ENCODE measurements at regions of chrX and their contacts with region 1.

Region 1: DNA sequence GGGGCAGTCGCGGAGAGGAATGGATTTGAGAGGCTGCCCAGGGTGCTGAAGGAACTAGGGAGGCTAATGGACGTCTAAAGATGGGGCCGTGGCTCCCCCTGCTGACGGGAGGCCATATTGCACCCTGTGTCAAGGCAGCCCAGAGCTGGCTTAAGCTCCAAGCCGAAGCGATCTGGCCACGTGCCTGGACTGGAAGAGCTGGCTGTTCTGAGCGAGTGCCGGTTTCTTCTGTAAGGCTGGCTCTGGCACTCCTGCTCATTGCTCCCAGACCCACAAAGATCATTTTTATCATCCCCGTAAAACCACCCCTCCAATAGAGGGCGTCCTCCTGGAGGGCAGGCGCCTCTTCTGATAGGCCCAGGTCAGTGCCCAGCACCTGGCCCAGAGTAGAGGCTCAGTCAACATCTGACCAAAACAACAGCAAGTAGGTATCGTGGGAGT is 5.6 kb downstream of the PNCK start:
- DNase-seq: peak; percentile 79
- H3K4me3 ChIP-seq: no peak overlapping the region
- H3K27ac ChIP-seq: no peak overlapping the region
- H3K4me1 ChIP-seq: no peaks in the 10 kb centered on the region
- H3K27me3 ChIP-seq: no peaks in the 10 kb centered on the region
- CTCF ChIP-seq: peak; percentile 40 to 84 (median 74)
- POLR2A ChIP-seq: no peak

Region 2: GRCh38 chrX:153539171-153539978 is 128.6 kb before region 1 on chrX:
- intact Hi-C with region 1: loop called (anchors 5 kb)
- DNase-seq: peak; percentile 32
- H3K4me3 ChIP-seq: no peak overlapping the region
- H3K27ac ChIP-seq: no peak overlapping the region
- H3K4me1 ChIP-seq: no peaks in the 10 kb centered on the region
- H3K27me3 ChIP-seq: no peaks in the 10 kb centered on the region
- CTCF ChIP-seq: peak in 3 of 4 experiments; percentile 25 to 78 (median 75)
- POLR2A ChIP-seq: no peak

Region 3: DNA sequence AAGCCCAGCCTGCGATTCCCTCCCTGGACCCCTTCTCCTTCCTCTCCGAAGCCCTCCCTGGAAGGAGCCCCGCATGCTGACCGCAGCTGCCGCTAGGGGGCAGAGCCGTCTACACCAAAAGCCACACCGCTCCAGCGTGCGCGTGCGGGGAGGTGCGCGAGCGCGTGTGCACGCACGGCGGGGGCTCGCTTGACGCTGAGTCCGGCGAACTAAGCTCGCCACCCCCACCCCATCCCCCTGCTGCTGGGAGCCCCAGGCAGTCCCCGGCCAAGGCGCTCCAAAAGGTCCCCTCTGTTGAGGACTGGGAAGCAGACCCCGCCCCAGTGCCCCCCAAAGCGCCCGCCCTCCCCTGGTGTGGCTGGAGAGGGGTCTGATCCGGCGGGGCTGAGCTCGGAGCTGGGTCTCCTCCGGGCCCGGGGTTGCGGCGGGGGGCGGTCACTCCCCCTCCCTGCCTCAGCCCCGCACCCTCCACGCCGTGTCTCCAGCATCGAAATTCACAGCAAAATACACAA is 58.0 kb before region 1 on chrX:
- intact Hi-C with region 1: loop called (anchors 10 kb)
- DNase-seq: peak; percentile 27
- H3K4me3 ChIP-seq: peak overlapping the region; percentile 17 to 27
- H3K27ac ChIP-seq: no peak overlapping the region
- H3K4me1 ChIP-seq: no peaks in the 10 kb centered on the region
- H3K27me3 ChIP-seq: no peaks in the 10 kb centered on the region
- CTCF ChIP-seq: peak; percentile 45 to 70 (median 60)
- POLR2A ChIP-seq: no peak

Region 4: GRCh38 chrX:153708415-153708814 is 40.4 kb after region 1 on chrX:
- intact Hi-C with region 1: no loop called
- DNase-seq: peak; percentile 64
- H3K4me3 ChIP-seq: no peak overlapping the region
- H3K27ac ChIP-seq: no peak overlapping the region
- H3K4me1 ChIP-seq: no peaks in the 10 kb centered on the region
- H3K27me3 ChIP-seq: no peaks in the 10 kb centered on the region
- CTCF ChIP-seq: peak in 3 of 4 experiments; percentile 65 to 82 (median 78)
- POLR2A ChIP-seq: no peak

Region 5: DNA sequence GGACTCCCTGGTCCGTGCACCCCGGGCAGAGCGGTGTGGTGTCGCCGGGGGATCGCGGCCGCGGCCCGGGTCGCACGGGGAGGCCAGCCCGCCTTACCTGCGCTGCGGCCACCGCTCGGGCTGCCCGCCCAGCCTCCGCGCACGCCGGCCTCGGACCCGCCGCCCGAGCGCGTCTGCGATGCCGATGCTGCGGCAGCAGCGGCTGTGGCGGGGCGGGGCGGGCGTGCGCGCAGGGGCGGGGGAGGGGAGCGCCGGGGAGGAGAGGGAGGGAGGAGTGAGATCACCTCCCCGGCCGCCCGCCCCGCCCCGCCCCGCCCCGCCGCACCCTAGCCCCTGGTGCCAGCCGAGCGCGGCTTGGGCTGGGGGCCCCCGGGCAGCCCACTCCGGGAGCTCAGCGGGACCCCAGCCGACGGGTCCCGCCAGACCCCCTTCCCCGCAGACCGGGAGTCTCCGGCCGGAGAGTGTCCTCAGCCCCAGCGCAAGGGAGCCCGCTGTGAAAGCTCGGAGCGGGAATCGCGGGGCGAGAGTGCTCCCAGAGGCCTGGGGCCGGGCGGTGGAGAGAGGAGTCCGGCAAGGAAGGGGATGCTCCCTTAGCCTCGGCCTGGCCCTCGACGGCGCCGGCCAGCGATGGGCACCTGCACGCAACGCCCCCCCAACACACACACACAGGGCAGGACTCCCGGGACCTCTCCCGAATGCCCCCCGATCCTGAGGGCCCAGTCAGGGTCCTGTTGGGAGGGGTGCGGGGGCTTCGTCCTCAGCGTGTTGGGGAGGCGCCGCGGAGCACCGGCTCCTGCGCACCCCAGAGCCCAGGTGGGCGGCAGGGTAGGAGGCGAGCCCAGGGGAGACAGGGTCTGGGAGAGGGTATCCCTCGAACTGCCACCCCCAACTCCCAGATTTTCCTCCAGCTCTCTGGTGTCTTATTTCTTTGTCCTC is 218.3 kb after region 1 on chrX and contains the start of gene L1CAM:
- intact Hi-C with region 1: no loop called
- DNase-seq: no peak
- H3K4me3 ChIP-seq: no peak within 1 kb of the TSS
- H3K27ac ChIP-seq: no peak within 1 kb of the TSS
- H3K4me1 ChIP-seq: no peaks in the 10 kb centered on the region
- H3K27me3 ChIP-seq: peaks cover 2% of the 10 kb centered on the region
- CTCF ChIP-seq: no peak
- POLR2A ChIP-seq: no peak
- total RNA-seq, gene L1CAM: 0.73 to 18.0 TPM